Caco-2 (cell line): ENCODE measurements at regions of chr11 and their contacts with region 1.

Region 1: DNA sequence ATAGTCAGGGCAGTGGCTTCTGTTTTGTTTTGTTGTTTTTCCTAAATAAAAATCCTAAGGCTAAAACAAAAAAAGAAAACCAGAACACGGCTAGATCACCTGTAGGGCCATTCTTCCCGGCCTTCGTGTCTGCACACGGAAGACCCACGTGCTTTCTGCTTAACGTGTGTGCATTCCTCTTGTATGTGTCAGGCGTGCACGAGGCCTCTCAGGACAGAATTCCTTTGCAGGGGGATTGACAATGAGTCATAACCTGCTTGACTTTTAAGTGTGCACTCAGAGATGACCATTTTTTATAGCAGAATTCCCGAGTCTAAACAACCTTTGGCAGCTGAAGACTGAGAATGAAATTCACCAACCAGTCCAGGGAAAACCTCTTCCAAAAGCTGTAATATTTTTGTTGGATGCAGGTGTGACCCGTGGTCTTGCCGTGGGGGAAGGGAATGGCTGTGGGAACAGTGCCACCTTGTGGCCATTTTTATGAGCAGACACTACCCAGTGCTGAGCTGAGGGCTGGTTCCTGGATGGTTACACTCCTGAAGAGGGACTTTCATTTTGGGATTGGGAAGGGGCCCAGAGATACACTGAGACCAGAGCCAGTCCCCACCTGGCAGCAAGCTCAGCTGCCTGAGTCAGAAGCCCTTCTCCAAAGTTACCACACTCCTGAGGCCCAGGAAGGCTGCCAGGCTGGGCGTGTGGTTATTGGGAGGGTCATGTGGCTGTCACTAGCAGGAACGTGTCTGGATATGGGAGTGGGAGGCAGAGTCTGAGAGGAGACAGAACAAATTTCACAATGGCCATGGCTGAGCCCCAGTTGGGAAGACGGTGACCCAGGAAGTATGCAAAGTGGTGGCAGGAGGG is 35.8 kb upstream of the DKK3 start:
- DNase-seq: peak; percentile 90 to 92
- H3K4me3 ChIP-seq: peak overlapping the region; percentile 6; the same call in 1 of the 2 replicates
- H3K4me3 Mint-ChIP-seq: peak overlapping the region; percentile 65
- H3K27ac Mint-ChIP-seq: peak overlapping the region; percentile 97
- H3K4me1 ChIP-seq: peaks cover 45% of the 10 kb centered on the region
- H3K4me1 Mint-ChIP-seq: peaks cover 48% of the 10 kb centered on the region
- H3K27me3 ChIP-seq: no peaks in the 10 kb centered on the region
- H3K27me3 Mint-ChIP-seq: no peaks in the 10 kb centered on the region
- CTCF ChIP-seq: peak; percentile 87 to 89

Region 2: GRCh38 chr11:11787305-11788062 is 256.7 kb before region 1 on chr11:
- CTCF ChIA-PET with region 1: interaction called, 6 read pairs
- POLR2A ChIA-PET with region 1: no interaction called
- intact Hi-C with region 1: loop called (anchors 1 kb)
- DNase-seq: peak; percentile 69 to 78
- H3K4me3 ChIP-seq: no peak overlapping the region
- H3K4me3 Mint-ChIP-seq: no peak overlapping the region
- H3K27ac Mint-ChIP-seq: no peak overlapping the region
- H3K4me1 ChIP-seq: no peaks in the 10 kb centered on the region
- H3K4me1 Mint-ChIP-seq: no peaks in the 10 kb centered on the region
- H3K27me3 ChIP-seq: no peaks in the 10 kb centered on the region
- H3K27me3 Mint-ChIP-seq: peaks cover 9% of the 10 kb centered on the region
- CTCF ChIP-seq: peak; percentile 76 to 85

Region 3: GRCh38 chr11:11841723-11842420 is 202.3 kb before region 1 on chr11 and contains the start of gene USP47:
- CTCF ChIA-PET with region 1: interaction called, 4 read pairs
- POLR2A ChIA-PET with region 1: no interaction called
- intact Hi-C with region 1: loop called (anchors 5 kb)
- DNase-seq: peak; percentile 95 to 96
- H3K4me3 ChIP-seq: peak within 1 kb of the TSS; percentile 84
- H3K4me3 Mint-ChIP-seq: no peak within 1 kb of the TSS
- H3K27ac Mint-ChIP-seq: no peak within 1 kb of the TSS
- H3K4me1 ChIP-seq: peaks cover 30% of the 10 kb centered on the region
- H3K4me1 Mint-ChIP-seq: no peaks in the 10 kb centered on the region
- H3K27me3 ChIP-seq: no peaks in the 10 kb centered on the region
- H3K27me3 Mint-ChIP-seq: no peaks in the 10 kb centered on the region
- CTCF ChIP-seq: peak in 1 of 2 experiments; percentile 77
- total RNA-seq, gene USP47: 50.4 and 52.8 TPM in 2 replicates

Region 4: GRCh38 chr11:11966826-11967668 is 77.1 kb before region 1 on chr11:
- CTCF ChIA-PET with region 1: interaction called, 11 read pairs
- POLR2A ChIA-PET with region 1: no interaction called
- intact Hi-C with region 1: loop called (anchors 1 kb)
- DNase-seq: peak; percentile 83 to 84
- H3K4me3 ChIP-seq: no peak overlapping the region
- H3K4me3 Mint-ChIP-seq: no peak overlapping the region
- H3K27ac Mint-ChIP-seq: no peak overlapping the region
- H3K4me1 ChIP-seq: peaks cover 20% of the 10 kb centered on the region
- H3K4me1 Mint-ChIP-seq: peaks cover 24% of the 10 kb centered on the region
- H3K27me3 ChIP-seq: no peaks in the 10 kb centered on the region
- H3K27me3 Mint-ChIP-seq: no peaks in the 10 kb centered on the region
- CTCF ChIP-seq: peak; percentile 85 to 90

Region 5: DNA sequence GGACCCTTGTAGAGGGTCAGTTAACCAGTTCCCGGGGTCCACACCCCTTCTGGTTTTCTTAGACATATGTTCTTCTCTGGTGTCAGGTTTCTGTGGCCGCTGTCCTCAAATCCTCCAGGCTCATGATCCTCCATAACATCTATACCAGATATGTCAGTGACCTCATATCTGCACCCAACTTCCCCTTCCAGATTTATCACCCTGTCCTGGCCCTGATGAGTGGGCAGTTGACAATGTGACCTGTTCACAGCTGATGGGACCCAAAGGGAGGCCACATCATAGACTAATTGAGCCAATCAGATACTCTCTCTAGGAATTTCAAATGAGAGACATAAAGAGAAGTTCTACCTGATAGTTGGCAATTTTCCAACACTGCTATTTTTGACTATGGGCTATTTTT is 40.9 kb before region 1 on chr11:
- CTCF ChIA-PET with region 1: interaction called, 10 read pairs
- POLR2A ChIA-PET with region 1: interaction called, 20 read pairs
- intact Hi-C with region 1: no loop called
- DNase-seq: no peak
- H3K4me3 ChIP-seq: no peak overlapping the region
- H3K4me3 Mint-ChIP-seq: no peak overlapping the region
- H3K27ac Mint-ChIP-seq: no peak overlapping the region
- H3K4me1 ChIP-seq: peaks cover 7% of the 10 kb centered on the region; the same call in 1 of the 2 replicates
- H3K4me1 Mint-ChIP-seq: peaks cover 9% of the 10 kb centered on the region
- H3K27me3 ChIP-seq: no peaks in the 10 kb centered on the region
- H3K27me3 Mint-ChIP-seq: no peaks in the 10 kb centered on the region
- CTCF ChIP-seq: no peak

Region 6: DNA sequence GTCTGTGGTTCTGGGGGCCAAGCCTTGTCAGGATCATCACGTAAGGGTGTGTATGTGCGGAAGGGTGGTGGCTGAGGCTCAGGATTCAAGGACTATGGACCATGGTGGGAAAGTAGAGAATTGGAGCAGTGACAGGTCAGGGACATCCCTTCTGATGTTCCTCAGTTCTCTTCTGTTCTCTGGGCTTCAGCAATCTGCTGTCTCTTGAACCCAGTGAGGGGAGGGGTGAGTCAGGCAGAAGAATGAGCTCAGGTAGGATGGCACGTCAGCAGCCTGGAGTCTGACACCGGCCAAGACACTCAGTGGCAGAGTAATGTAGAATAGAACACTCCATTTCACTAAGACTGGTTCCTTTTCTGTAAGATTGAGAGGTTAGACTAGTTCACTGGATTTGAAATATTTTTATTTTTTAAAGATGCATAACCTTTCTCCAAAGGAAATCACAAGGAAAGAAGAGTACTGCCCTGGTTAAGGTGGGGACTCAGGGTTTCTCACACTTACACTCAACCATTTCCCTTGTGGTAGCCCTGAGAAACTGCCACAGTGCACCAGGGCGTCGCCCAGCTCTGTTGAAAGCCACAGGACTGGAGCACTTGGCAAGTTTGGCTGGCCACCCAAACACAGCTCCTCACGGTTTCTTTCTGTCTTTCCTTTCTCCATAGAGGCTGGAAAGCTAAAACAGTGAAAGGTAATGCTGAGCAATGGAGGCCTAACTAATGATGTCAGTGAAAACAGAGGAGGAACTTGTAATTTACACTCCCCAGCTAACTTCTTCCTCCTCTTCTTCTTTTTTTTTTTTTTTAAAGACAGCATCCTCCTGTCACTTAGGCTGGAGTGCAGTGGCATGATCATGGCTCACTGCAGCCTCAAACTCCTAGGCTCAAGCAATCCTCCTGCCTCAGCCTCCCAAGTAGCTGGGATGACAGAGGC is 43.2 kb after region 1 on chr11:
- CTCF ChIA-PET with region 1: interaction called, 9 read pairs
- POLR2A ChIA-PET with region 1: no interaction called
- intact Hi-C with region 1: loop called (anchors 2 kb)
- DNase-seq: peak; percentile 34 to 42
- H3K4me3 ChIP-seq: no peak overlapping the region
- H3K4me3 Mint-ChIP-seq: no peak overlapping the region
- H3K27ac Mint-ChIP-seq: peak overlapping the region; percentile 78
- H3K4me1 ChIP-seq: peaks cover 73% of the 10 kb centered on the region
- H3K4me1 Mint-ChIP-seq: peaks cover 60% of the 10 kb centered on the region
- H3K27me3 ChIP-seq: no peaks in the 10 kb centered on the region
- H3K27me3 Mint-ChIP-seq: no peaks in the 10 kb centered on the region
- CTCF ChIP-seq: peak; percentile 7 to 11

Region 7: GRCh38 chr11:12110201-12110713 is 66.1 kb after region 1 on chr11 and contains the start of gene MICAL2:
- CTCF ChIA-PET with region 1: no interaction called
- POLR2A ChIA-PET with region 1: no interaction called
- intact Hi-C with region 1: no loop called
- DNase-seq: peak; percentile 90 to 96
- H3K4me3 ChIP-seq: peak within 1 kb of the TSS; percentile 61
- H3K4me3 Mint-ChIP-seq: peak within 1 kb of the TSS; percentile 83
- H3K27ac Mint-ChIP-seq: peak within 1 kb of the TSS; percentile 83
- H3K4me1 ChIP-seq: peaks cover 39% of the 10 kb centered on the region
- H3K4me1 Mint-ChIP-seq: peaks cover 38% of the 10 kb centered on the region
- H3K27me3 ChIP-seq: no peaks in the 10 kb centered on the region
- H3K27me3 Mint-ChIP-seq: no peaks in the 10 kb centered on the region
- CTCF ChIP-seq: no peak
- total RNA-seq, gene MICAL2: 247 and 272 TPM in 2 replicates

Region 8: DNA sequence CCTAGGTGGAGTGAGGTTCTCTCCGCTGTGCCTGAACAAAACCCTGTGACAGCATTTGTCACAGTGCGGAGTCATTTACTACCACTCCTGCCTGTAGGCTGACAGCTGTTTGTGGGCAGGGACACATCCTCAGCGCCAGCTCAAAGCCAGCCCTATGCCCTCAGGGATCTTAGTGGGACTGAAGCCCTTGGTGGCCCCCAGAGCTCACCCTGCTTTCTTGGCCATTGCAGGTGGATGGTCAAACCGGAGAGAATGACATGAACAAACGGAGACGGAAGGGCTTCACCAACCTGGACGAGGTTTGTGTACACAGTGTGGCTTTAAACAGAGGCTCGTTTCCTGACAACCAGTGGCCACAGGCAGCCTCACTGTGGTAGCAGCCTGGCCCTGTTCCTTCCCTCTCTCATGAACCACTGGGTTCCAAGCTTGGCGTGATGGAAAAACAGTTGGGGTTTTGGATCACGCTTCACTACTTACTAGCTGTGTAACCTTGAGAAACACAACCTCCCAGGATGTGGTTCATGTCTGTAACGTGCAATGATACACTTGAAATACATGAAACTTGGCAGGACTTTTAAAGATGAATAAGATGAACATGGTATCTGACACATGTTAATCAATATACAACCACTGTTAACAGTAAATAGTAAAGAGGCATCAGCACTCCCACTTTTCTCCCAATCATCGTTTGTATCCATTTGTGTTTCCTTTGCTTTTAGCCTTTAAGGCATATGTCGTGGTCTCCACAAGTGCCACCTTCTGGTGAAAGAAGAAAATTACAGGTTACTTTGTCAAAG is 192.0 kb after region 1 on chr11:
- CTCF ChIA-PET with region 1: interaction called, 10 read pairs
- POLR2A ChIA-PET with region 1: no interaction called
- intact Hi-C with region 1: loop called (anchors 1 kb)
- DNase-seq: peak in 1 of 2 experiments; percentile 68
- H3K4me3 ChIP-seq: no peak overlapping the region
- H3K4me3 Mint-ChIP-seq: no peak overlapping the region
- H3K27ac Mint-ChIP-seq: peak overlapping the region; percentile 75
- H3K4me1 ChIP-seq: peaks cover 68% of the 10 kb centered on the region
- H3K4me1 Mint-ChIP-seq: peaks cover 48% of the 10 kb centered on the region
- H3K27me3 ChIP-seq: no peaks in the 10 kb centered on the region
- H3K27me3 Mint-ChIP-seq: no peaks in the 10 kb centered on the region
- CTCF ChIP-seq: peak; percentile 62 to 70